ENCODE measurements at regions of chr11 and their contacts with region 1.

Region 1: DNA sequence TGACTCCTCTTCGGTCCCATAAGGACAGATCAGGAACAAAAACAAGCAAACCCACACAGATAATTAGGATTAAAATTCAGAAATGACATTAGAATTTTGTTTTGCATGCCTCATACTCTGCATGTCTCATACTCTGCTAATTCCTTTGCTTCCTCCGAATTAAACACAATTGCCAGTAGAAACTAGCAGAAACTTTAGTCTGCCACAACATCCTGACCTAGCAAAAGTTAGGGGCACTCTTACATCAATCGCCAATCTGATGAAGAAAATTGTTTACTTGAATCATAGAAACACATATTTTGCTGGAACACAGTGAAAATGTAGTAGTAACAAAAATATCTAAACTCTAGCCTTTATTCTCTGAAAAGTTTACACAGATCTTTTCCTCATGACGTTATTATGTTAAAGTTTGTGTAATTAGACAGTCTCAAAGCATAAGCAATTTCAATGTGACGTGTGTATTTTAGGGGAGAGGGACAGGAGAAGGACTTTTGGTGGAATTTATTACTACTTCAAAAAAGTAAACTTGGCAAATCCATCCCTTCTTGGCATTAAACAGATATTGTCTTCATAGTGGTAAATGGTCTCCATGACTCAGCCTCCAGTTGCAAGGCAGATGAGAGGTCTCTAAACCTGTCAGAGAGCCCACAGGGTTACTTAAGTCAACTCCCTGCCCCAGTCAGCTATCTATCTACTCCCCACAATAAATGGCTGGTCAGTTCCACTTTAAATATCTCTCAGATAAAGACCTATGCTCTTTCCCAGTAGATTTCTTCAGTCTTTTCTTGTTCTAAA is 249.8 kb upstream of the UBASH3B start:
- DNase-seq: no peak
- ATAC-seq: no peak
- H3K4me3 ChIP-seq: no peak overlapping the region
- H3K27ac ChIP-seq: no peak overlapping the region
- H3K4me1 ChIP-seq: no peaks in the 10 kb centered on the region
- H3K27me3 ChIP-seq: peaks cover 3% of the 10 kb centered on the region; the same call in 1 of the 2 replicates
- CTCF ChIP-seq: no peak

Region 2: GRCh38 chr11:122491509-122491908 is 85.8 kb after region 1 on chr11:
- CTCF ChIA-PET with region 1: no interaction called
- POLR2A ChIA-PET with region 1: interaction called, 11 read pairs
- in situ Hi-C with region 1: no loop called
- intact Hi-C with region 1: no loop called
- DNase-seq: no peak
- ATAC-seq: no peak
- H3K4me3 ChIP-seq: no peak overlapping the region
- H3K27ac ChIP-seq: no peak overlapping the region
- H3K4me1 ChIP-seq: no peaks in the 10 kb centered on the region
- H3K27me3 ChIP-seq: peaks cover 19% of the 10 kb centered on the region; the same call in 1 of the 2 replicates
- CTCF ChIP-seq: no peak

Measured in Panc1 (cell line).